Activated CD4-positive, alpha-beta T cell treated with anti-CD3 and anti-CD28 coated beads for 36 hours (primary cell): ENCODE measurements at regions of chr17 and their contacts with region 1.

Region 1: DNA sequence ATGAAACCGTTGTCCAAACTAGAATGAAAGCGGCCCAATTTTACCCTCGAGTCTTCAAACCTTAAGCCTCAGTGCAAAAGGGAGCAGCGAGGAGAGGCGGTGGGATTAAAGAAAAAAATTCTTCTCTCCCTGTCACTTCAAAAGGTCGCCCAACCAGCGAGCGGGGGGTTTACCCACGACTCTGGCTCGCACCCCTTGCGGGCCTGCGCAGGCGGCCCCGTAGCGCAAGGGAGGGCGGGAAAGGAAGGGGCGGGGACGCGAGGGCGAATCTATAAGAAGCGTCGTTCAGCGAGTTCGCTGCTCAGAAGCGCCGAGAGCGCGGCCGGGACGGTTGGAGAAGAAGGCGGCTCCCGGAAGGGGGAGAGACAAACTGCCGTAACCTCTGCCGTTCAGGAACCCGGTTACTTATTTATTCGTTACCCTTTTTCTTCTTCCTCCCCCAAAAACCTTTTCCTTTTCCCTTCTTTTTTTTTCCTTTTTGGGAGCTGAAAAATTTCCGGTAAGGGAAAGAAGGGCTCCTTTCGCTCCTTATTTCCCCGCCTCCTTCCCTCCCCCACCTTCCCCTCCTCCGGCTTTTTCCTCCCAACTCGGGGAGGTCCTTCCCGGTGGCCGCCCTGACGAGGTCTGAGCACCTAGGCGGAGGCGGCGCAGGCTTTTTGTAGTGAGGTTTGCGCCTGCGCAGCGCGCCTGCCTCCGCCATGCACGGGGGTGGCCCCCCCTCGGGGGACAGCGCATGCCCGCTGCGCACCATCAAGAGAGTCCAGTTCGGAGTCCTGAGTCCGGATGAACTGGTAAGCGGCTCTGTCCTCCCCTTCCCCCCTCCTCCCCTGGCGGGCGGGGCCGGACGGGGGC is at the start of gene POLR2A:
- DNase-seq: peak; percentile 98
- ATAC-seq: peak; percentile 71
- H3K4me3 Mint-ChIP-seq: peak within 1 kb of the TSS; percentile 99
- H3K27ac Mint-ChIP-seq: peak within 1 kb of the TSS; percentile 100
- H3K4me1 Mint-ChIP-seq: peaks cover 71% of the 10 kb centered on the region
- H3K27me3 Mint-ChIP-seq: no peaks in the 10 kb centered on the region
- total RNA-seq, gene POLR2A: 193 to 203 TPM

Region 2: DNA sequence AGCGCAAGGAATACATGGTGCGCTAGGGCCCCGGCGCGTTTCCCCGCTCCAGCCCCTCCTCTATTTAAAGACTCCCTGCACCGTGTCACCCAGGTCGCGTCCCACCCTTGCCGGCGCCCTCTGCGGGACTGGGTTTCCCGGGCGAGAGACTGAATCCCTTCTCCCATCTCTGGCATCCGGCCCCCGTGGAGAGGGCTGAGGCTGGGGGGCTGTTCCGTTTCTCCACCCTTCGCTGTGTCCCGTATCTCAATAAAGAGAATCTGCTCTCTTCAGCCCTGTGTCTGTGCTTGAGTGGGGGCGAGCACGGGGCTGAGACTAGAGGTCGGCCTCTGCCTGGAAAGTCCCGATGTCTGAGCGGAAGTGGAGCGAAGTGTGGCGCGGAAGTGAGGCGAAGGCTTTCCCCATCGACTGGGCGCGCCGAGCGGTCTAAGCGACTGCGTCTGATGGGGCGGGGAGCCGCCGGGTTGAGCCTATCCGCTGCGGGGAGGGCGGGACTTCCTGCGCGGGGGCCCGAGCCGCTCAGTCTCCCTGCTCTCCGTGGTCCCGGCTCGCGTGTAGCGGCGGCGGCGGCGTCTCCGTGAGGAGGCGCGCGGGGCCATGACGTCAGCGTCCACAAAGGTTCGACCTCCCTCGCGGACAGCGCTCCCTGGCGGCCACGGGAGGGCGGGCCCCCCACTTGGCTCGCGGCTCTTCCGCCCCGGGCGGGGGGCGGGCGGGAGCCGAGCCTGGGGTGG is 469.9 kb before region 1 on chr17:
- CTCF ChIA-PET with region 1: no interaction called
- POLR2A ChIA-PET with region 1: no interaction called
- intact Hi-C with region 1: loop called in 1 of 2 experiments (anchors 10 kb)
- DNase-seq: peak; percentile 99
- ATAC-seq: peak; percentile 88
- H3K4me3 Mint-ChIP-seq: peak overlapping the region; percentile 92
- H3K27ac Mint-ChIP-seq: peak overlapping the region; percentile 99
- H3K4me1 Mint-ChIP-seq: peaks cover 54% of the 10 kb centered on the region
- H3K27me3 Mint-ChIP-seq: no peaks in the 10 kb centered on the region

Region 3: DNA sequence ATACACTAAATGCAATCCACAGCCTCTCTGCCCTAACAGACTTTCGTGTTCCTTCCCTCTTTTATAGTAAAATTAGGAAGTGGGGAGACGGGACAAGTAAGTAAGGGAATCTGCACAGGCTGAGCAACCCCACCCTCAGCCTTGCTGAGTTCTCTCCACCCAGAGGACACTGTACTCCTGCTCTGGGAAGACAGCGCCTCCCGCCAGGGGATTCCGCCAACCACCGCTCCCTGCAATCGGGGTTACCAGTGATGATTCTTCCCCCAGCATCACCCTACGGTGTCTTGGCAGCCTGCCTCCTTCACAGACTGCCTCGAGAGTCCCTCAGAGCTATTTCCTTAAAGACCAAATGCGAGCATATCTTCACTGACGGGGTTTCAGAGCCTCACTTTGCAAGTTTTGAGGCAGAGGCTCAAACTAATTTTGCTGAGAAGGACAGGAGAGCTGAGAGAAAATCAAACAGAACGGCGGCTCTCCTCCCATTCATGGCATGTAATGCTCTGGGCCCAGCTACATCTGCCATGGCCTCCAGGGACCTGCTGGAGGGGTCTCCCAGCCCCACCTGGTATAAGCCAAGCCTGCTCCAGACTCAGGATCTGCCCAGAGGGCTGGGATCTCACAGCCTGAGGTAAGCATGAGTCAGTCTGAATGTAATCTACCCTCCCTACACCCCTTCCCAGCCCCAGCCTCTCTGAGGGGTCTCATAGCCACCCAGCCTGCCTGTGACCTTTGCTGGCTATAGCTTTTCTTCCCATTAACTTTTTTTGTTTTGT is 346.9 kb before region 1 on chr17:
- CTCF ChIA-PET with region 1: no interaction called
- POLR2A ChIA-PET with region 1: no interaction called
- intact Hi-C with region 1: no loop called
- DNase-seq: no peak
- ATAC-seq: no peak
- H3K4me3 Mint-ChIP-seq: no peak overlapping the region
- H3K27ac Mint-ChIP-seq: no peak overlapping the region
- H3K4me1 Mint-ChIP-seq: peaks cover 15% of the 10 kb centered on the region
- H3K27me3 Mint-ChIP-seq: no peaks in the 10 kb centered on the region

Region 4: GRCh38 chr17:7280519-7281429 is 203.5 kb before region 1 on chr17:
- CTCF ChIA-PET with region 1: no interaction called
- POLR2A ChIA-PET with region 1: no interaction called
- intact Hi-C with region 1: loop called in 1 of 2 experiments (anchors 1 kb)
- DNase-seq: peak; percentile 92
- ATAC-seq: peak; percentile 84
- H3K4me3 Mint-ChIP-seq: peak overlapping the region; percentile 70
- H3K27ac Mint-ChIP-seq: no peak overlapping the region
- H3K4me1 Mint-ChIP-seq: peaks cover 21% of the 10 kb centered on the region
- H3K27me3 Mint-ChIP-seq: peaks cover 17% of the 10 kb centered on the region

Region 5: DNA sequence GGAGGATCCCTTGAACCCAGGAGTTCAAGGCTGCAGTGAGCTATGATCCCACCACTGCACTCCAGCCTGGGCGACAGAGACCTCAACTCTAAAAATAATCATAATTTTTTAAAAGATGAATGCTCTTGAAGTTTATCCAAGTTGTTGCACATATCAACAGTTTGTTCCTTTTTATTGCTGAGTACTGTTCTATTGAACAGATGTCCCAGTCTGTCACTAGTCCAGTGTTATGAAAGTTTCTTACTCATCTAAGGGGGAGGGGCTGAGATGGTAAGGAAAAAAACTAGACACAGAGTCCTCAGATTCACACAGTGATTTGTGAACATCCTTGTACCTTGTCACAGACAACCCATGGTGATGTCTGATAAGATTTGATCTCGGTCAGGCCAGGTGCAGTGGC is 144.1 kb before region 1 on chr17:
- CTCF ChIA-PET with region 1: no interaction called
- POLR2A ChIA-PET with region 1: no interaction called
- intact Hi-C with region 1: no loop called
- DNase-seq: no peak
- ATAC-seq: no peak
- H3K4me3 Mint-ChIP-seq: no peak overlapping the region
- H3K27ac Mint-ChIP-seq: peak overlapping the region; percentile 42
- H3K4me1 Mint-ChIP-seq: peaks cover 36% of the 10 kb centered on the region
- H3K27me3 Mint-ChIP-seq: no peaks in the 10 kb centered on the region

Region 6: GRCh38 chr17:7403977-7404736 is 80.1 kb before region 1 on chr17 and contains the start of gene TMEM256:
- CTCF ChIA-PET with region 1: no interaction called
- POLR2A ChIA-PET with region 1: interaction called, 6 read pairs
- intact Hi-C with region 1: loop called (anchors 1 kb)
- DNase-seq: peak; percentile 99
- ATAC-seq: peak; percentile 94
- H3K4me3 Mint-ChIP-seq: peak within 1 kb of the TSS; percentile 89
- H3K27ac Mint-ChIP-seq: peak within 1 kb of the TSS; percentile 92
- H3K4me1 Mint-ChIP-seq: peaks cover 16% of the 10 kb centered on the region
- H3K27me3 Mint-ChIP-seq: peaks cover 2% of the 10 kb centered on the region
- total RNA-seq, gene TMEM256: 55.8 to 58.1 TPM

Region 7: DNA sequence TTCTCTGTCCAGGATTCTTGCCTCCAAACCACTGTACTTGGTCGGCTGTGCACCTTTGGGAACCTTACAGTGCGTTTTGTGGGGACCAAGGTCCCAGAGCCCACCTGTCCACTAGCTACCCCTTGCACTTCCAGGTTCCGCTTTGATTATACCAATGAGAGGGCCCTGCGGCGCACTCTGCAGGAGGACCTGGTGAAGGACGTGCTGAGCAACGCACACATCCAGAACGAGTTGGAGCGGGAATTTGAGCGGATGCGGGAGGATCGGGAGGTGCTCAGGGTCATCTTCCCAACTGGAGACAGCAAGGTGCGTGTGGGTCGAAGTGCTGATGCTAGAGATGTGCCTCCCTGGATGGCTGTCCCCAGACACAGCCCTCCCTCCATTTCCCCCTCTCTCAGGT is 18.7 kb after region 1 on chr17:
- CTCF ChIA-PET with region 1: no interaction called
- POLR2A ChIA-PET with region 1: interaction called, 7 read pairs
- intact Hi-C with region 1: loop called in 1 of 2 experiments (anchors 2 kb)
- DNase-seq: peak; percentile 32
- ATAC-seq: peak; percentile 11
- H3K4me3 Mint-ChIP-seq: no peak overlapping the region
- H3K27ac Mint-ChIP-seq: no peak overlapping the region
- H3K4me1 Mint-ChIP-seq: no peaks in the 10 kb centered on the region
- H3K27me3 Mint-ChIP-seq: no peaks in the 10 kb centered on the region

Region 8: GRCh38 chr17:7614422-7615264 is 130.3 kb after region 1 on chr17 and contains the start of gene FXR2:
- CTCF ChIA-PET with region 1: interaction called, 3 read pairs
- POLR2A ChIA-PET with region 1: no interaction called
- intact Hi-C with region 1: loop called (anchors 1 kb)
- DNase-seq: peak; percentile 100
- ATAC-seq: peak; percentile 95
- H3K4me3 Mint-ChIP-seq: peak within 1 kb of the TSS; percentile 85
- H3K27ac Mint-ChIP-seq: peak within 1 kb of the TSS; percentile 93
- H3K4me1 Mint-ChIP-seq: peaks cover 32% of the 10 kb centered on the region
- H3K27me3 Mint-ChIP-seq: no peaks in the 10 kb centered on the region
- total RNA-seq, gene FXR2: 35.6 to 50.2 TPM

Region 9: DNA sequence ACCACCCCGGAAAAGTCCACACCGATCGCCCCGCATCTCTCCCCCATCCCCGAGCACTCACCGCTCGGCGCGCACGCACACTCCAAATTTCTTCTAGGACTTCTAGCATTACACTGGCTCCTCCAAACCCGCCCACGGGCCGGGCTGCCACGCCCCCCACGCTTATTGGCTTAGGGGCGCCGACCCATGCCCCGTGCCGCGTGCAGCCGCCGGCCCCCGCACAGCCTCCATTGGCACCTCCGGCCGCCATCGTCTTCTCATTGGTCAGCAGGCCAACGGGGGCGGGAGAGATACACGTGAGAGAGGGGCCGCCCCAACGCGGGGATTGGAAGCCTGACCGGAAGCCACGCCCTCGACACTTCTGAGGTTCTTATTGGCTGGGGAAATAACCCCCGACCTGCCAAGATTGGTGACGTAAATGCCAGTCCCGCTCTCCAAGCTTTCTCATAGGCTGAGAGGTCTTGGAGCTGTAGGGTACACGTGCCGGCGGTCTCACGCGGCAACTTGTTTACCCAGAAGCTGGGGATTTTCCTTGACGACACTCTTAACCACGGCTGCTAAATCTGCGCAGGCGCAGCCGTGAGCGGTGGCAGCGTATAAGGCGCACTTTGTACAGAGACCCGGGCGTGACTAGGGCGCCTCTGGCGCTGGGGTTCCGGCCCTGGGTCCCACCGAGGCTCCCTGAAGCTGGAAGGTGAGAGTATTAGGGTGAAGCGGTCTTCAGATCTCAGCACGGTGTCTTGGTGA is 672.1 kb after region 1 on chr17:
- CTCF ChIA-PET with region 1: no interaction called
- POLR2A ChIA-PET with region 1: no interaction called
- intact Hi-C with region 1: loop called in 1 of 2 experiments (anchors 10 kb)
- DNase-seq: peak; percentile 100
- ATAC-seq: peak; percentile 75
- H3K4me3 Mint-ChIP-seq: no peak overlapping the region
- H3K27ac Mint-ChIP-seq: no peak overlapping the region
- H3K4me1 Mint-ChIP-seq: peaks cover 49% of the 10 kb centered on the region
- H3K27me3 Mint-ChIP-seq: no peaks in the 10 kb centered on the region